Left ventricle myocardium inferior (tissue), 1 donor: ENCODE measurements at regions of chr3 and their contacts with region 1.

Region 1: GRCh38 chr3:179769411-179770247 is 116.8 kb downstream of the USP13 start:
- DNase-seq: no peak
- H3K4me3 ChIP-seq: no peak overlapping the region
- H3K27ac ChIP-seq: no peak overlapping the region
- H3K4me1 ChIP-seq: peaks cover 34% of the 10 kb centered on the region
- H3K27me3 ChIP-seq: no peaks in the 10 kb centered on the region
- CTCF ChIP-seq: no peak

Region 2: DNA sequence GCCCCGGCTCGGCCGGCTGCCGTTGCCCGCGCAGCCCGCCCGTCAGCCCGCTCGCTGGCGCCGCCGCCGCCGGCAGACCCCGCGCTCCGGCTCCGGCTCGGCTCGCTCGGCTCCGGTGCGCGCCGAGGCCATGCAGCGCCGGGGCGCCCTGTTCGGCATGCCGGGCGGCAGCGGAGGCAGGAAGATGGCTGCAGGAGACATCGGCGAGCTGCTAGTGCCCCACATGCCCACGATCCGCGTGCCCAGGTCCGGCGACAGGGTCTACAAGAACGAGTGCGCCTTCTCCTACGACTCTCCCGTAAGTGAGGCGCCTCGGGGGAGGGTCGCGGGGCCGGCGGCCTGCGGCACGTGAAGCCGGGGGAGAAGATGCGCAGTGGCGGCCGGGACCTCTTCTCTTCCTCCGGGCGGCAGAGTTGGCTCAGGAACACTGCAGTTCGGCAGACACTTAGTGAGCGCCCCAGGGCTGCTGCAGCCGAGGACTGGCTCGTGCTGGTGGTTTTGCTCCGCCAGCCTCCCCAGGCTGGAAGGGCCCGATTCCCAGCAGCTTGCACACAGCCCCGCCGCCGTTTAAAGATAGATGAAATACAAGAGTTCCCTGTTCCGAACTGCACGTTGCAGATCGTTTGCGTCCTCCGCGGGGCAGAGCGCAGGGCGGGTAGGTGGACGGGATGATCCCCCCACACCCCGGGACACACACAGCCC is 116.4 kb before region 1 on chr3:
- intact Hi-C with region 1: loop called (anchors 5 kb)
- DNase-seq: peak; percentile 78
- H3K4me3 ChIP-seq: peak overlapping the region; percentile 91
- H3K27ac ChIP-seq: peak overlapping the region; percentile 98
- H3K4me1 ChIP-seq: peaks cover 54% of the 10 kb centered on the region
- H3K27me3 ChIP-seq: no peaks in the 10 kb centered on the region
- CTCF ChIP-seq: no peak